T-cell (primary cell): ENCODE measurements at regions of chr1 and their contacts with region 1.

Region 1: DNA sequence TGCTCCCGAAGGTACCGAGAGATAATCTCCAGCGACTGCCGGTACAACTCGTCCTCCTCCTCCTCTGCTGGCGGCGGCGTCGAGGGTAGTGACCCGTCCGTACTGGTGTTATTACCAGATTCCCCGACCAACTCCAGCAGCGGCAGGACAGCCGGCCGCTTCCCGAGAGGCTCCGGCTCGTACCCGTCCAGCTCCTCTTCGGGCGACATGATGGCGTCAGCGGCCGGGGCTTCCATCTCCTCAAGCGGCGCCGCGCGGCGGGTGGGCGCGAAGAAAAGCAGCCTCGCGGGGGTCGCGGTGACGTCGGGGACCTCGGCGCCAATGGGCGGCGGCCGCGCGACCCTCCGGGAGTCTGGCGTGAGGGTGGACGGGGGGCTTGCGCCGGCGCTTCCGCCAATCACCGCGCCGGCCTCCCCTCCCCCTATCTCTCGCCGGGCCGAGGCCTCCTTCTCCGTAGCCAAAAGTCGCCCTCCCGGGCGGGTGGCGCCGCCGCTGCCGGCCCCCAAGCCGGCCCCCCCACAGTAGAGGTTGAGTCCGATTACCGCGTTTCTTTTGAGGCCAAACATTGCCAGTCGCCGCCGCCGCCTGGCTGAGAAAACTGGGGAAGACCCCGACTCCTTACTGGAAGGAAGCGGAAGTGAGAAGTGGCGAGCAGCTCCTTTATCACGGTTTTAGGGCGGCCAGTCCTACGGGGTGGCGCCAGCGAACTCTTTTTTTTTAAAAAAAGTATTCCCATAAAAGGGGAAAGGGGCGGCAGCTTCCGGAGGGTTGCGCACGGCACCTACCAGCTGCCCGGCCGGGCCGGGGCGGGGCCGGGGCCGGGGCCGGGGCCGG is at the start of gene MCL1:
- DNase-seq: peak; percentile 66 to 92 (median 81)
- ATAC-seq: peak; percentile 81 to 86 (median 84)
- H3K4me3 ChIP-seq: peak within 1 kb of the TSS; percentile 77 to 100
- H3K4me3 Mint-ChIP-seq: peak within 1 kb of the TSS; percentile 95 to 100 (median 99)
- H3K27ac ChIP-seq: peak within 1 kb of the TSS; percentile 99
- H3K27ac Mint-ChIP-seq: peak within 1 kb of the TSS; percentile 98
- H3K4me1 ChIP-seq: peaks cover 19 to 25% of the 10 kb centered on the region in 2 experiments
- H3K4me1 Mint-ChIP-seq: peaks cover 32 to 42% (median 35%) of the 10 kb centered on the region in 3 donors
- H3K27me3 ChIP-seq: no peaks in the 10 kb centered on the region
- H3K27me3 Mint-ChIP-seq: no peaks in the 10 kb centered on the region
- total RNA-seq, gene MCL1: 478 to 731 (median 517) TPM

Region 2: DNA sequence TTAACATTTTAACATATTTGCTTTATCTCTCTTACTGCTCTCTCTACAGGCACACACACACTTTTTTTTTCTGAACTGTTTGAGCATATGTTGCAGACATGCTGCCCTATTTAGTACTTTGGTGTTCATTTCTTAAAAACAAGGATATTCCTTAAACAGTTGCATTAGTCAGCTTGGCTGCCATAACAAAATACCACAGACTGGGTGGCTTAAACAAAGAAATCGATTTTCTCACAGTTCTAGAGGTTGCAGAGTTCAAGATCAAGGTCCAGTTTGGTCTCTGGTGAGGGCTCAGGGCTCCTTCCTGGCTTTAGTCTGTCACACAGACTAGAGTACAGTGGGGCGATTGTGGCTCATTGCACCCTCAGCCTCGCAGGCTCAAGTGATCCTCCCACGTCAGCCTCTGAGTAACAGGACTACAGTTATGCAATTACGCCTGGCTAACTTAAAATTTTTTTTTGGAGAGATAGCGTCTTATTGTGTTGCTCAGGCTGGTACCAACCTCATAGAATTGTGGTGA is 168.5 kb before region 1 on chr1:
- CTCF ChIA-PET with region 1: no interaction called
- POLR2A ChIA-PET with region 1: no interaction called
- DNase-seq: no peak
- ATAC-seq: no peak
- H3K4me3 ChIP-seq: no peak overlapping the region
- H3K4me3 Mint-ChIP-seq: no peak overlapping the region
- H3K27ac ChIP-seq: no peak overlapping the region
- H3K27ac Mint-ChIP-seq: peak overlapping the region in 1 of 2 donors; percentile 41
- H3K4me1 ChIP-seq: peaks cover 0 to 9% of the 10 kb centered on the region in 2 experiments
- H3K4me1 Mint-ChIP-seq: peaks cover 63 to 82% (median 69%) of the 10 kb centered on the region in 3 donors
- H3K27me3 ChIP-seq: no peaks in the 10 kb centered on the region
- H3K27me3 Mint-ChIP-seq: no peaks in the 10 kb centered on the region

Region 3: DNA sequence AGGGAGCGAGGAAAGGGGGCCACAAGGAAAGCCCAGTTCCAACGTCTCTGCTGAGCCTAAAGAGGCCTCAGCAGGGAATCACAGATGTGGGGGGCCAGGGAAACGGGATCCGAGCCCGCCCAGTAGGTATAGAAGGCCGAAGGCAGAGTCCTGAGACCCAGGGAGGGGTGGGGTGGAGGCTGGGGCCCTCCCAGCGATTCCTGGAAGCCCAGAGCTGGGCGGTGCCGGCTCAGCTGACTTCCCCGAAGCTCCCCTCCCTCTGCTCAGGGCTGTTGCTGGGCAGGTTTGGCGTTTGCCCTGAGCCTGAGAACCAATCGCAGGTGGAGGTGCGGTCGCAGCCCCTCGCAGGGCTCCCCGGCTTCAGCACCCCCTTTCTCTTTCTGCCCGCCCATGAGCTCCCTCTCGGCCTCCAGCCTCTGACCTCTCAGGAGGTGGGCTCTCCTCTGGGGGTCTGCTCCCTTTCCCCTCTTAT is 17.2 kb before region 1 on chr1:
- CTCF ChIA-PET with region 1: interaction called, 21 to 170 read pairs
- POLR2A ChIA-PET with region 1: interaction called, 115 to 255 read pairs
- DNase-seq: peak in 34 of 35 experiments; percentile 66 to 91 (median 83)
- ATAC-seq: peak; percentile 46 to 55 (median 52)
- H3K4me3 ChIP-seq: peak overlapping the region; percentile 83 to 90
- H3K4me3 Mint-ChIP-seq: peak overlapping the region; percentile 91 to 99 (median 95)
- H3K27ac ChIP-seq: peak overlapping the region; percentile 95
- H3K27ac Mint-ChIP-seq: peak overlapping the region; percentile 100
- H3K4me1 ChIP-seq: peaks cover 33 to 82% of the 10 kb centered on the region in 2 experiments
- H3K4me1 Mint-ChIP-seq: peaks cover 60 to 71% (median 61%) of the 10 kb centered on the region in 3 donors
- H3K27me3 ChIP-seq: no peaks in the 10 kb centered on the region
- H3K27me3 Mint-ChIP-seq: no peaks in the 10 kb centered on the region

Region 4: GRCh38 chr1:150567717-150568593 is 11.2 kb before region 1 on chr1:
- CTCF ChIA-PET with region 1: interaction called, 4 to 170 read pairs
- POLR2A ChIA-PET with region 1: interaction called, 115 to 255 read pairs
- DNase-seq: peak in 11 of 35 experiments; percentile 25 to 60 (median 46)
- ATAC-seq: peak; percentile 14 to 27 (median 18)
- H3K4me3 ChIP-seq: peak overlapping the region; percentile 51 to 60
- H3K4me3 Mint-ChIP-seq: peak overlapping the region; percentile 82 to 95 (median 85)
- H3K27ac ChIP-seq: peak overlapping the region; percentile 84
- H3K27ac Mint-ChIP-seq: peak overlapping the region; percentile 98 to 99
- H3K4me1 ChIP-seq: peaks cover 67 to 99% of the 10 kb centered on the region in 2 experiments
- H3K4me1 Mint-ChIP-seq: peaks cover 94 to 95% (median 95%) of the 10 kb centered on the region in 3 donors
- H3K27me3 ChIP-seq: no peaks in the 10 kb centered on the region
- H3K27me3 Mint-ChIP-seq: no peaks in the 10 kb centered on the region

Region 5: DNA sequence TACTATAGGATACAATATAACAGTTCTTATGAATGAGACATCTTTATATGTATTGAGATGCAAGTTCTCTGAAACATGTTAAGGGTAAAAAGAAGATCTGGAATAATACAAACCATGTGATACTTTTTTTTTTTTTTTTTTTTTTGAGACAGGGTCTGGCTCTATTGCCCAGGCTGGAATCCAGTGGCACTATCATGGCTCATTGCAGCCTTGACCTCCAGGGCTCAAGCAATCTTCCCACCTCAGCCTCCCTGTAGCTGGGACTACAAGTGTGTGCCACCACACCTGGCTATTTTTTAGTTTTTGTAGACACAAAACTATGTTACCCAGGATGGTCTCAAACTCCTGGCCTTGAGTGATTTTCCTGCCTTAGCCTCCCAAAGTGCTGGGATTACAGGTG is 22.4 kb after region 1 on chr1:
- CTCF ChIA-PET with region 1: no interaction called
- POLR2A ChIA-PET with region 1: interaction called, 3 to 10 read pairs
- DNase-seq: no peak
- ATAC-seq: no peak
- H3K4me3 ChIP-seq: no peak overlapping the region
- H3K4me3 Mint-ChIP-seq: no peak overlapping the region
- H3K27ac ChIP-seq: no peak overlapping the region
- H3K27ac Mint-ChIP-seq: no peak overlapping the region
- H3K4me1 ChIP-seq: no peaks in the 10 kb centered on the region
- H3K4me1 Mint-ChIP-seq: peaks cover 7 to 19% (median 9%) of the 10 kb centered on the region in 3 donors
- H3K27me3 ChIP-seq: no peaks in the 10 kb centered on the region
- H3K27me3 Mint-ChIP-seq: no peaks in the 10 kb centered on the region

Region 6: DNA sequence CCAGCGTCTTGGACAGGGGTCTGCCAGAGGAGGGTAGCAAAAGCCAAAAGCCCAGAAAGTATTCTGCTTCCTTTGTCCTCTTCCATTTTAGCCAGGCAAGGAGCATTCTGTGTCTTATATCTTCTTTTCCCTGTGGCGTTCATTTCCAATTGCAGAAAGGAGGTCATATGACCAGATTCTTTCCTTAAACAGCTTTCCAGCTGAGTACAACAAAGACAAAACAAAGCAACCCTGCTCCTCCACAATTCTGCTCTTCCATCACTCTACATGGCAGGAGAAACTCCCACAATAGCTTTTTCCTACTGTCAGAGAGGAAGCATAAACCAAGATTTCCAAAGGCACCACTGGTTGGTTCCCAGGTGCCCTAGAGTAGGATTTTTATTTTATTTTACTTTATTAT is 30.6 kb after region 1 on chr1:
- CTCF ChIA-PET with region 1: no interaction called
- POLR2A ChIA-PET with region 1: interaction called, 8 to 44 read pairs
- DNase-seq: no peak
- ATAC-seq: no peak
- H3K4me3 ChIP-seq: no peak overlapping the region
- H3K4me3 Mint-ChIP-seq: no peak overlapping the region
- H3K27ac ChIP-seq: peak overlapping the region; percentile 99
- H3K27ac Mint-ChIP-seq: peak overlapping the region in 1 of 2 donors; percentile 58
- H3K4me1 ChIP-seq: peaks cover 11 to 45% of the 10 kb centered on the region in 2 experiments
- H3K4me1 Mint-ChIP-seq: peaks cover 25 to 47% (median 42%) of the 10 kb centered on the region in 3 donors
- H3K27me3 ChIP-seq: no peaks in the 10 kb centered on the region
- H3K27me3 Mint-ChIP-seq: no peaks in the 10 kb centered on the region

Region 7: GRCh38 chr1:150621497-150622302 is 42.5 kb after region 1 on chr1:
- CTCF ChIA-PET with region 1: interaction called, 4 to 31 read pairs
- POLR2A ChIA-PET with region 1: interaction called, 4 to 14 read pairs
- DNase-seq: peak; percentile 22 to 84 (median 60)
- ATAC-seq: peak; percentile 73 to 84 (median 78)
- H3K4me3 ChIP-seq: no peak overlapping the region
- H3K4me3 Mint-ChIP-seq: peak overlapping the region in 2 of 3 donors; percentile 17 to 34
- H3K27ac ChIP-seq: peak overlapping the region; percentile 40
- H3K27ac Mint-ChIP-seq: peak overlapping the region; percentile 86 to 92
- H3K4me1 ChIP-seq: peaks cover 10 to 21% of the 10 kb centered on the region in 2 experiments
- H3K4me1 Mint-ChIP-seq: peaks cover 33 to 59% (median 59%) of the 10 kb centered on the region in 3 donors
- H3K27me3 ChIP-seq: no peaks in the 10 kb centered on the region
- H3K27me3 Mint-ChIP-seq: no peaks in the 10 kb centered on the region

Region 8: GRCh38 chr1:150629115-150629928 is 50.1 kb after region 1 on chr1 and contains the start of gene ENSA:
- CTCF ChIA-PET with region 1: interaction called in 1 of 2 experiments, 6 read pairs
- POLR2A ChIA-PET with region 1: interaction called, 4 to 32 read pairs
- DNase-seq: peak; percentile 91 to 99 (median 97)
- ATAC-seq: peak; percentile 86 to 93 (median 91)
- H3K4me3 ChIP-seq: peak within 1 kb of the TSS; percentile 76 to 96
- H3K4me3 Mint-ChIP-seq: no peak within 1 kb of the TSS
- H3K27ac ChIP-seq: peak within 1 kb of the TSS; percentile 97
- H3K27ac Mint-ChIP-seq: peak within 1 kb of the TSS in 1 of 2 donors; percentile 65
- H3K4me1 ChIP-seq: peaks cover 12 to 18% of the 10 kb centered on the region in 2 experiments
- H3K4me1 Mint-ChIP-seq: peaks cover 0 to 19% (median 17%) of the 10 kb centered on the region in 3 donors
- H3K27me3 ChIP-seq: no peaks in the 10 kb centered on the region
- H3K27me3 Mint-ChIP-seq: no peaks in the 10 kb centered on the region
- total RNA-seq, gene ENSA: 108 to 158 (median 110) TPM